A549 (cell line): ENCODE measurements at regions of chr15 and their contacts with region 1.

Region 1: DNA sequence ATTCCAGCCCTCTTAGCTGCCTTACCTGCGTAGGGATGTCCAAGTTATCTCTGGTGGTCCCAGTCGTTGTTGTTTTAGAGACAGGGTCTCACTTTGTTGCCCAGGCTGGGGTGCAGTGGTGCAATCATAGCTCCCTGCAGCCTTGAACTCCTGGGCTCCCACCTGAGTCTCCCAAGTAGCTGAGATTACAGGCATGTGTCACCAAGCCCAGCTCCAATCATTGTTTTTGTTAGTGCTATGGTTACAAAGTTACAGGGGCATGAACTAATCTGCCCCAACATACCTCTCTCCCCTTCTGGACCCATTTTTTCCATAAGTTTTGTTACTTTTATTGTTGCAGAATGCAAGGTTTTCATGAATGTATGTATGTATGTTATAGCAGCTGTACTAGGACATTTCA is 54.7 kb downstream of the CTDSPL2 start:
- DNase-seq: peak in 1 of 2 experiments; percentile 3
- ATAC-seq: no peak
- H3K4me3 ChIP-seq: no peak overlapping the region
- H3K27ac ChIP-seq: no peak overlapping the region
- H3K4me1 ChIP-seq: no peaks in the 10 kb centered on the region
- CTCF ChIP-seq: no peak
- EP300 ChIP-seq: no peak
- POLR2A ChIP-seq: no peak
- RAD21 ChIP-seq: no peak

Region 2: GRCh38 chr15:44501768-44502366 is 19.8 kb after region 1 on chr15:
- CTCF ChIA-PET with region 1: interaction called, 10 read pairs
- POLR2A ChIA-PET with region 1: no interaction called
- DNase-seq: peak; percentile 20 to 29
- ATAC-seq: peak; percentile 59 to 68; a peak in 3 of 6 replicates
- H3K4me3 ChIP-seq: no peak overlapping the region
- H3K27ac ChIP-seq: no peak overlapping the region
- H3K4me1 ChIP-seq: no peaks in the 10 kb centered on the region
- CTCF ChIP-seq: peak; percentile 60
- EP300 ChIP-seq: no peak
- POLR2A ChIP-seq: no peak
- RAD21 ChIP-seq: peak; percentile 59 to 63